ENCODE measurements at regions of chr12 and their contacts with region 1.

Region 1: DNA sequence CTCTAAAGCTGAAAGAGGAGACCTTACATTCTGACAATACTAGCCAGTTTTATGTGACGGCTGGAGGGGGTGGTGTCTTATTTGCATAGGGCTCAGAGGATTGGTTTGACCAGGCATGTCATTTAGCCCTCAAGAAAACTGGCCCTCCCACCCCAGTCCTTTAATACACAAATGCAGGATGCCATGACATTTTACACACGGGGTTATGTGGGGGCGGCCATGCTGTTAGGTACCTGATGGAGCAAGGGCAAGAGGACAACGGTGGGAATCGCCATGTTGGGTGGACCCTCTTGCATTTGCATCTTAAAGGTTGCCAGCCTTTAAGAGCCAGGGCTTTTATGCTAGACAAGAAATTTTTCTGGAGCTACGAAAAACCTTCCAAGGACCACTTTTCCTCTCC is 23.3 kb downstream of the MDM2 start:
- DNase-seq: no peak
- H3K4me3 ChIP-seq: no peak overlapping the region
- H3K27ac ChIP-seq: no peak overlapping the region
- H3K4me1 ChIP-seq: no peaks in the 10 kb centered on the region
- H3K27me3 ChIP-seq: no peaks in the 10 kb centered on the region
- CTCF ChIP-seq: no peak

Region 2: GRCh38 chr12:68695454-68695853 is 135.8 kb before region 1 on chr12:
- CTCF ChIA-PET with region 1: no interaction called
- dilution Hi-C with region 1: loop called (anchors 25 kb)
- in situ Hi-C with region 1: no loop called
- intact Hi-C with region 1: no loop called
- DNase-seq: no peak
- H3K4me3 ChIP-seq: no peak overlapping the region
- H3K27ac ChIP-seq: no peak overlapping the region
- H3K4me1 ChIP-seq: no peaks in the 10 kb centered on the region
- H3K27me3 ChIP-seq: no peaks in the 10 kb centered on the region
- CTCF ChIP-seq: no peak

Region 3: GRCh38 chr12:68745904-68746571 is 85.2 kb before region 1 on chr12 and contains the start of gene SLC35E3:
- CTCF ChIA-PET with region 1: no interaction called
- dilution Hi-C with region 1: no loop called
- in situ Hi-C with region 1: loop called in 1 of 2 experiments (anchors 10 kb)
- intact Hi-C with region 1: no loop called
- DNase-seq: peak; percentile 89
- H3K4me3 ChIP-seq: peak within 1 kb of the TSS; percentile 63 to 90 (median 85)
- H3K27ac ChIP-seq: peak within 1 kb of the TSS; percentile 62
- H3K4me1 ChIP-seq: peaks cover 14% of the 10 kb centered on the region
- H3K27me3 ChIP-seq: no peaks in the 10 kb centered on the region
- CTCF ChIP-seq: no peak
- total RNA-seq, gene SLC35E3: 5.5 to 12.4 TPM

Region 4: DNA sequence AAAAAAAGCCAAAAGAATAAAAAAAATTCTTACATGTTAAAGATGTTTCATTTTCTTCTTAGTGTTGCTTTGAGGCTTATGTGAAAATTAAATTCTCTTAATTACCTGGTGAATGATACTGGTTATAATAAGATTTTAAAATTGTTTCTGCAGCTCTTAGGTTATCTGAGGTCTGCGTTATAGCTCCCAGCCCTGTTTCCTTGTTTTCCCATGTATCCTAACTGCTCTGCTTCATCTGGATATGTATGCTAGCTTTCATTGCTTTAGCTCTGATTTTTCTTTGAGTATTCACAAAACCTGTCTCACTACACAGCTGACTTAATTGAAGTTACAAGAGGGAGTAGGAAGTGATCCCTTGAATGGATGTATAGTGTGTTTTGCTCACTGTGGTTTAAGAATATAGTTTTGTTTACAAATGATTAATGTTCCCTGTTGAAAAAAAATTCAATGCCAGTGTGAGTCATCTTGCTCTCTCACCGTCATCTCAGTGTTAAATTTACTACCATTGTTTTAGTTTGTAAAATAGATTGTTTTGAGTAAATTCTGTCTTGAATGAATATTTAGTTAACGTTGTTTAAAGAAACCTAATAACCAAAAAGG is 434.9 kb after region 1 on chr12:
- CTCF ChIA-PET with region 1: no interaction called
- dilution Hi-C with region 1: no loop called
- in situ Hi-C with region 1: no loop called
- intact Hi-C with region 1: no loop called
- DNase-seq: peak; percentile 79
- H3K4me3 ChIP-seq: no peak overlapping the region
- H3K27ac ChIP-seq: no peak overlapping the region
- H3K4me1 ChIP-seq: peaks cover 4% of the 10 kb centered on the region
- H3K27me3 ChIP-seq: no peaks in the 10 kb centered on the region
- CTCF ChIP-seq: no peak

Measured in mammary epithelial cell (primary cell).